Activated T-helper 2 cell treated with anti-CD3 and anti-CD28 coated beads, Interferon-gamma antibody, Interleukin-2, Interleukin-4, amounts not matched to agents 10 μg/mL and 5 μg/mL and 100 μg/mL, durations not matched to agents 14 hours and 24 hours and 36 hours (primary cell): ENCODE measurements at regions of chr11 and their contacts with region 1.

Region 1: DNA sequence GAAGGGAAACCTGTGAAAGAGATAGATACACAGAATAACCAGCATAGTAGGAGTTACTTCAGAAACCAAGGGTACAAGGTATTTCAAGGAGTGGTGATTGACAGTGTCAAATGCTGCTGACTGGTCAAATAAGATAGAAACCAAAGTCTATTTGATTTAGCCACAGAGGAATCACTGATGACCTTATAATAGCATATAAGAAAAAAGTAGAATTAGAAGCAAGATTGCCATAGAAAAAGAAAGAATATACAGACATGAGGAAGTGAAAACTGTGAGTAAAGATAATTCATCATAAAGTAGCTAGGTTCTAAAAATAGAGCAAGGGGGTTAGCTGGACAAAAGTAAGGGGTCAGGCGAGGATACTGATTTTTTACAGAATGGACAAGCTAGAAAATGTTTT is 14.2 kb downstream of the ZBTB44 start:
- DNase-seq: no peak
- H3K4me3 Mint-ChIP-seq: no peak overlapping the region
- H3K27ac Mint-ChIP-seq: no peak overlapping the region
- H3K4me1 Mint-ChIP-seq: peaks cover 35% of the 10 kb centered on the region
- H3K27me3 Mint-ChIP-seq: no peaks in the 10 kb centered on the region

Region 2: GRCh38 chr11:130050257-130050656 is 250.3 kb before region 1 on chr11:
- intact Hi-C with region 1: no loop called
- DNase-seq: no peak
- H3K4me3 Mint-ChIP-seq: no peak overlapping the region
- H3K27ac Mint-ChIP-seq: no peak overlapping the region
- H3K4me1 Mint-ChIP-seq: peaks cover 1% of the 10 kb centered on the region
- H3K27me3 Mint-ChIP-seq: peaks cover 25% of the 10 kb centered on the region

Region 3: GRCh38 chr11:130278151-130278550 is 22.4 kb before region 1 on chr11:
- intact Hi-C with region 1: loop called (anchors 2 kb)
- DNase-seq: no peak
- H3K4me3 Mint-ChIP-seq: peak overlapping the region; percentile 23
- H3K27ac Mint-ChIP-seq: peak overlapping the region; percentile 64
- H3K4me1 Mint-ChIP-seq: peaks cover 32% of the 10 kb centered on the region
- H3K27me3 Mint-ChIP-seq: no peaks in the 10 kb centered on the region

Region 4: DNA sequence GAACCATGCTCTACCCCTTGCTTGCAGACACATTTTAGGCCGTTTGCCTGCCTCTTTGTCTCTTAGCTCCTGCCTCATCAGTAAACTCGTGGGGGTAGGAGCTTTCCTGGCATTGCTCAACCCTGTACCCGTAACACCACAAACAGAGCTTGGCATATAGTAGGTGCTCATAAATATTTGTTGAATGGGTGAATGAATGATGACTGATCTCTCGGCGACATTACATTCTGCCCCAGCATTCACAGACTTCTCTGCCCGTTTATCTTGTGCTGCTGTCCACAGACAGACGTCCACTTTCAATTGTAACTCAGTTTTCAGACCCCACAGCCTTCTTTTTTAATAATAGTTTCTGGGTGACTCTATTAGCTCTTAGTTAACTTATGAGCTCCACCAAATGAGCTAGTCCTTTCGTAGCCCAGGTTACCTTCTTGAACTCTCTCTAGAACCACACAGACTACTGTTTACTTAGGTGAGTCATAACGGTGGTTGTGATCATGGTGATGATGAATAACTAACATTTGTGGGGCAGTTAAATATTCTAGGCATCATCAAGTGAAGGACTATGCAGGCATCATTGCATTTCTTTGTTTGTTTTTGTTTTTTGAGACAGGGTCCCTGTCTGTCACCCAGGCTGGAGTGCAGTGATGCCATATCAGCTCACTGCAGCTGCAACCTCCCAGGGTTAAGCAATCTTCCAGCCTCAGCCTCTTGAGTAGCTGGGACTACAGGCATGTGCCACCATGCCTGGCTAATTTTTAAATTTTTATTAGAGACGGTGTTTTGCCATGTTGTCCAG is 336.4 kb after region 1 on chr11:
- intact Hi-C with region 1: loop called (anchors 10 kb)
- DNase-seq: no peak
- H3K4me3 Mint-ChIP-seq: no peak overlapping the region
- H3K27ac Mint-ChIP-seq: no peak overlapping the region
- H3K4me1 Mint-ChIP-seq: peaks cover 31% of the 10 kb centered on the region
- H3K27me3 Mint-ChIP-seq: no peaks in the 10 kb centered on the region